MCF 10A (cell line): ENCODE measurements at regions of chr7 and their contacts with region 1.

Region 1: DNA sequence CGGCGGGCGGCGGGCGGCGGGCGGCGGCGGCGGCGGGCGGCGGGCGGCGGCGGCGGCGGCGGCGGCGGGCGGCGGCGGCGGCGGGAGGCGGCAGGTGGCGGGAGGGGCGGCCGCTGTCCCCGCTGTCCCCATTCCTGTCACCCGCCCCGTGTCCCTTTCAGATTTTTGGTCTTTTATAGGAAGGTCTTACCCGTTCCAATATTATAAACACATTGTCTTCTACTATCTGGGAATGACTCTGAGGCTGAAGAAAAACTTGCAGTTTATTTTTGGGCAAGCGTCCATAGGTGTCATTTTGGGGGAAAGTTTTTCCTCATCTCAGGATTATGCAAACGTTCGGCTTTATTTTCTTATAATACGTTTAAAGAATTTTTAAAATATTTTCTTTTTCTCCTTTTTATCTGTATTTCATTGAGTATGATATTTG is 578 bp downstream of the ZNF713 start:
- DNase-seq: no peak
- H3K4me3 Mint-ChIP-seq: peak overlapping the region; percentile 94
- H3K27ac Mint-ChIP-seq: peak overlapping the region; percentile 97
- H3K4me1 Mint-ChIP-seq: no peaks in the 10 kb centered on the region
- H3K27me3 Mint-ChIP-seq: no peaks in the 10 kb centered on the region
- CTCF ChIP-seq: no peak

Region 2: GRCh38 chr7:55774326-55775064 is 113.3 kb before region 1 on chr7:
- CTCF ChIA-PET with region 1: no interaction called
- POLR2A ChIA-PET with region 1: interaction called, 4 read pairs
- intact Hi-C with region 1: loop called (anchors 10 kb)
- DNase-seq: peak; percentile 70
- H3K4me3 Mint-ChIP-seq: peak overlapping the region; percentile 25
- H3K27ac Mint-ChIP-seq: peak overlapping the region; percentile 73
- H3K4me1 Mint-ChIP-seq: no peaks in the 10 kb centered on the region
- H3K27me3 Mint-ChIP-seq: no peaks in the 10 kb centered on the region
- CTCF ChIP-seq: no peak

Region 3: GRCh38 chr7:55951637-55952351 is 64.0 kb after region 1 on chr7 and contains the start of gene MRPS17:
- CTCF ChIA-PET with region 1: no interaction called
- POLR2A ChIA-PET with region 1: no interaction called
- intact Hi-C with region 1: loop called (anchors 5 kb)
- DNase-seq: peak; percentile 89
- H3K4me3 Mint-ChIP-seq: peak within 1 kb of the TSS; percentile 99
- H3K27ac Mint-ChIP-seq: peak within 1 kb of the TSS; percentile 99
- H3K4me1 Mint-ChIP-seq: no peaks in the 10 kb centered on the region
- H3K27me3 Mint-ChIP-seq: no peaks in the 10 kb centered on the region
- CTCF ChIP-seq: no peak
- total RNA-seq, gene MRPS17: 31.0 and 36.9 TPM in 2 replicates